ENCODE measurements at regions of chr7 and their contacts with region 1.

Region 1: GRCh38 chr7:158782761-158783401 is 46.4 kb downstream of the ESYT2 start:
- DNase-seq: peak; percentile 46 to 87 (median 80)
- H3K4me3 ChIP-seq: no peak overlapping the region
- H3K27ac ChIP-seq: no peak overlapping the region
- H3K4me1 ChIP-seq: no peaks in the 10 kb centered on the region
- H3K27me3 ChIP-seq: no peaks in the 10 kb centered on the region

Region 2: DNA sequence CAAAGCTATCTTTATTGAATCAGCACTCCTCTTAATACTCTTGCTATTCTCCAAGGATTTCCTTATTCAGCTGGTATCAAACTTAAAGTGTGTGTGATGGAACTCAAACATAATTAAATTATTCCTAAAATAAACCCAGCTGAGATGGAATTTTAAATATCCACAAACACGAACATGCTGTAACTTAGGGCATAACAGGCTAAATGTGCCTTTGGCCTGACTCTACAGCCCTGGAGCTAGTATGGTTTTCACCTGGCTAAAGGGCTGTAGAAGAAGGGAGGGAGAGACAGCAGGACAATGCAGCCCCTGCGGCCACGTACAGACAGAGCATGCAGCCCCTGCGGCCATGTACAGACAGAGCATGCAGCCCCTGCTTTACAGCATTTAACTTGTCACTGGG is 12.4 kb after region 1 on chr7:
- CTCF ChIA-PET with region 1: interaction called, 11 read pairs
- POLR2A ChIA-PET with region 1: no interaction called
- DNase-seq: no peak
- H3K4me3 ChIP-seq: no peak overlapping the region
- H3K27ac ChIP-seq: no peak overlapping the region
- H3K4me1 ChIP-seq: no peaks in the 10 kb centered on the region
- H3K27me3 ChIP-seq: no peaks in the 10 kb centered on the region

Region 3: GRCh38 chr7:158829342-158830210 is 46.7 kb after region 1 on chr7 and contains the start of gene ESYT2:
- CTCF ChIA-PET with region 1: interaction called, 12 read pairs
- POLR2A ChIA-PET with region 1: no interaction called
- DNase-seq: peak; percentile 96 to 98 (median 98)
- H3K4me3 ChIP-seq: peak within 1 kb of the TSS; percentile 65 to 92 (median 89)
- H3K27ac ChIP-seq: peak within 1 kb of the TSS; percentile 85 to 93
- H3K4me1 ChIP-seq: peaks cover 23 to 47% (median 38%) of the 10 kb centered on the region in 4 experiments
- H3K27me3 ChIP-seq: no peaks in the 10 kb centered on the region

Region 4: GRCh38 chr7:158863611-158864506 is 81.0 kb after region 1 on chr7:
- CTCF ChIA-PET with region 1: interaction called, 11 read pairs
- POLR2A ChIA-PET with region 1: no interaction called
- DNase-seq: peak; percentile 35 to 70 (median 65)
- H3K4me3 ChIP-seq: peak overlapping the region; percentile 20 to 77 (median 48)
- H3K27ac ChIP-seq: peak overlapping the region; percentile 61 to 76
- H3K4me1 ChIP-seq: peaks cover 0 to 64% (median 56%) of the 10 kb centered on the region in 4 experiments
- H3K27me3 ChIP-seq: no peaks in the 10 kb centered on the region

Region 5: GRCh38 chr7:158976849-158977593 is 194.1 kb after region 1 on chr7:
- CTCF ChIA-PET with region 1: interaction called, 11 read pairs
- POLR2A ChIA-PET with region 1: no interaction called
- DNase-seq: peak; percentile 88 to 91 (median 89)
- H3K4me3 ChIP-seq: peak overlapping the region; percentile 23 to 86 (median 56)
- H3K27ac ChIP-seq: no peak overlapping the region
- H3K4me1 ChIP-seq: peaks cover 0 to 15% (median 13%) of the 10 kb centered on the region in 4 experiments
- H3K27me3 ChIP-seq: no peaks in the 10 kb centered on the region